ENCODE measurements at regions of chr6 and their contacts with region 1.

Region 1: GRCh38 chr6:12289933-12290820 is at the start of gene EDN1:
- DNase-seq: peak; percentile 70 to 93
- ATAC-seq: peak; percentile 60 to 64
- H3K4me3 ChIP-seq: peak within 1 kb of the TSS; percentile 81
- H3K27ac ChIP-seq: peak within 1 kb of the TSS; percentile 89 to 95
- H3K4me1 ChIP-seq: peaks cover 41% of the 10 kb centered on the region
- CTCF ChIP-seq: no peak
- EP300 ChIP-seq: peak in 1 of 2 experiments; percentile 34; a peak in 1 of 5 replicates
- POLR2A ChIP-seq: peak; percentile 96
- RAD21 ChIP-seq: peak; percentile 11 to 39; a peak in 3 of 5 replicates
- polyA plus RNA-seq, gene EDN1: 67.1 and 87.4 TPM in 2 replicates

Region 2: DNA sequence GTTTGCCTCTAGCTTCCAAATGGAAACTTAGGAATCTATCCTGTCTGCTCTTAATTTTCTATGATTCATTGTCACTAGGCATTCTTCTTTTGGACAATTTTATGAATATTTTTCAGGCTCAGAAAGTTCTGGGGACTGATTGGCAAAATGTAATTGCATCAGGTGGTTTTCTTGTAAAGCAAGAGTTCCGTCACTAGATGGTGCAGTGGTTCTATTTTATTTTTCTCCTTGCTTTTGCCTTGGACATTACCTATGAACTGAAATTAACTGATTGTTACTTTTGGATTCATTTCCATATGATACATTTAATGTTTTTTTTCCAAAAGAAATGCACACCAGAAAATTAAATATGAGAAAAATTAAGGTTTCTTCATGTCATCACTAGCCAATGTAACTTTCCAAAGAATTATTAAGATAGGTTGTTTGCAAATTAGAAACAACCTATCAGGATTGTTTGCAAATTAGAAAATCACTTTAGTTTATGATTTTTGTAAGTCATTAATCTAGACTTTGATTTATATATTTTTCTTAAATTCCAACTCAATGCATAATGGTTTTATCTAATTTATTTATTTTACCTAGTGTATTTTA is 704.7 kb before region 1 on chr6:
- CTCF ChIA-PET with region 1: interaction called, 25 read pairs
- POLR2A ChIA-PET with region 1: no interaction called
- DNase-seq: peak; percentile 28 to 58
- ATAC-seq: peak in 1 of 2 experiments; percentile 56; a peak in 2 of 6 replicates
- H3K4me3 ChIP-seq: no peak overlapping the region
- H3K27ac ChIP-seq: peak overlapping the region; percentile 60 to 77; a peak in 5 of 6 replicates
- H3K4me1 ChIP-seq: peaks cover 33% of the 10 kb centered on the region
- CTCF ChIP-seq: peak; percentile 72
- EP300 ChIP-seq: no peak
- POLR2A ChIP-seq: no peak
- RAD21 ChIP-seq: peak; percentile 80 to 87

Region 3: DNA sequence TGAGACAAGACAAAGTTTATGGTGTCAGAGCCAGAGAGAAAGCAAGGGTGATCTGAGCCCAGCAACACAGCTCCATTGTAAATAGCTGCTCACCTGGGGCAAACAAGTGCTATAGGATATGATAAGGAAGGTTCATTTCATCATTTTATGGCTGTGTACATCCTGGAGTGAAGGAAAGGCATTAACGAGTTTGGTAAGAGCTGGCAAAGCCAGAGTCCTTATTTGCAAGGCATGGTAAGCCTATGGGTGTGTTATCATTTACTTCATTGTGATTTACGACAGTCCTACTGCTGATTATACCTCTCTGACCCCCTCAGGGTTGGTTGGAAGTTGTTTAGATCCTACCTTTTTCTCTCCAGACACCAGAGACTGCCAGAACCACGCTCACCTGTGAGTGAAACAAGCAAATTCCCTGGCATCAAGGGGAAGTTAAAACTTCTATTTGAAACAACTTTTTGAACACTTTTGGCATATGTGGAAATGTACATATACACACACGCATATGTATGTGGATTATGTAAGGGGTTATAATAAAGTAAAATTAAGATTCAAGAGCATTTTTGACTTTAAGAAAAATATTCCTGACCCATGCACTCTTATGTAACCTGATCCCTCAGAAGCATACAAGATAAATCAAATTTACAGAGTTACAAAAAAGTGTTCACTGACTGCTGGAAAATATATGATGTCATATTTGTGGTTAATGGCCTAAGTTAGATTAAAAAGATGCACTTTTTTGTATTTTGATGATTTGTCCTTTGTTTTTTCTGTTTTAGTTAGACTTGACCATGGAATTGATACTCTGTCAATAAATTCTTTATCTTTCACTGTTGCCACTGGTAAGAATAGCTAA is 40.4 kb before region 1 on chr6:
- CTCF ChIA-PET with region 1: no interaction called
- POLR2A ChIA-PET with region 1: no interaction called
- DNase-seq: no peak
- ATAC-seq: no peak
- H3K4me3 ChIP-seq: no peak overlapping the region
- H3K27ac ChIP-seq: no peak overlapping the region
- H3K4me1 ChIP-seq: peaks cover 27% of the 10 kb centered on the region
- CTCF ChIP-seq: no peak
- EP300 ChIP-seq: no peak
- POLR2A ChIP-seq: no peak
- RAD21 ChIP-seq: no peak

Region 4: DNA sequence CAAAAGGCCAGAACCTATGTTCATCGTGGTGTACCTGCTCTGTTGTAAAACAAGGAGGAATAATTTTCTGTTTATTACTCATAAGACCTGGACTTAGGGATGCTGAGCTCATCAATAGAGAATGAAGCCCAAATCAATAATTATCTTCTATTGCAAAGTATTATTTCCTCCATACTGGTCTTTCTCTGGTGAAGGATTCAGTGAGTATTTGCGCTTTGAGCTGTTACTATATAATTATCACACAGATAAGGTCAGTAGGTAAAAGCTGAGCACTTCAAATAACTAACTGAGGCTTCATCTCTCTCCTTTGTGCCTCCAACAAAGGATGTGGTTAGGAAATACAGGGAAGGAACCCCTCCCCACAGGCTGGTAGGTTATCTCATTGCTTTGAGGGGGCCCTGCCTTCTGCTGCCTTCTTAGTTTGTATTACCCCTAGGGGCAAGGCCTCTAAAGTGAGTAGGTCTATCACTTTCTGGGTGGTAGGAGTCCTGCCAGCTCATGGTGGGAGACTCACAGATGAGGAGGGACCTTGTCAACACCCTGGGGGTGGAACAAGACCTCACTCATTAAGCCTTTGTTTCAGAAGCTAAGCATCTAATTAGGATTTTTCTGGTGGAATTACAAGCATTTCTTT is 34.5 kb after region 1 on chr6:
- CTCF ChIA-PET with region 1: interaction called, 5 read pairs
- POLR2A ChIA-PET with region 1: interaction called, 10 read pairs
- DNase-seq: peak in 1 of 2 experiments; percentile 73
- ATAC-seq: peak; percentile 23 to 49; a peak in 4 of 6 replicates
- H3K4me3 ChIP-seq: no peak overlapping the region
- H3K27ac ChIP-seq: peak overlapping the region; percentile 95 to 98
- H3K4me1 ChIP-seq: peaks cover 57% of the 10 kb centered on the region
- CTCF ChIP-seq: no peak
- EP300 ChIP-seq: no peak
- POLR2A ChIP-seq: no peak
- RAD21 ChIP-seq: no peak

Region 5: GRCh38 chr6:12343440-12344162 is 53.4 kb after region 1 on chr6:
- CTCF ChIA-PET with region 1: interaction called, 11 read pairs
- POLR2A ChIA-PET with region 1: interaction called, 28 read pairs
- DNase-seq: peak; percentile 46 to 96
- ATAC-seq: peak; percentile 74 to 79
- H3K4me3 ChIP-seq: no peak overlapping the region
- H3K27ac ChIP-seq: peak overlapping the region; percentile 85 to 98
- H3K4me1 ChIP-seq: peaks cover 74% of the 10 kb centered on the region
- CTCF ChIP-seq: no peak
- EP300 ChIP-seq: peak; percentile 31 to 92; a peak in 4 of 5 replicates
- POLR2A ChIP-seq: no peak
- RAD21 ChIP-seq: peak; percentile 23 to 32; a peak in 2 of 5 replicates

Region 6: GRCh38 chr6:12483712-12484111 is 193.5 kb after region 1 on chr6:
- CTCF ChIA-PET with region 1: interaction called, 36 read pairs
- POLR2A ChIA-PET with region 1: interaction called, 26 read pairs
- DNase-seq: peak; percentile 30 to 95
- ATAC-seq: peak; percentile 86 to 93
- H3K4me3 ChIP-seq: peak overlapping the region; percentile 22; the same call in 1 of the 3 replicates
- H3K27ac ChIP-seq: peak overlapping the region; percentile 92 to 98
- H3K4me1 ChIP-seq: peaks cover 54% of the 10 kb centered on the region
- CTCF ChIP-seq: no peak
- EP300 ChIP-seq: peak; percentile 75 to 79; a peak in 4 of 5 replicates
- POLR2A ChIP-seq: no peak
- RAD21 ChIP-seq: peak; percentile 39 to 45